ENCODE measurements at regions of chr5 and their contacts with region 1.

Region 1: DNA sequence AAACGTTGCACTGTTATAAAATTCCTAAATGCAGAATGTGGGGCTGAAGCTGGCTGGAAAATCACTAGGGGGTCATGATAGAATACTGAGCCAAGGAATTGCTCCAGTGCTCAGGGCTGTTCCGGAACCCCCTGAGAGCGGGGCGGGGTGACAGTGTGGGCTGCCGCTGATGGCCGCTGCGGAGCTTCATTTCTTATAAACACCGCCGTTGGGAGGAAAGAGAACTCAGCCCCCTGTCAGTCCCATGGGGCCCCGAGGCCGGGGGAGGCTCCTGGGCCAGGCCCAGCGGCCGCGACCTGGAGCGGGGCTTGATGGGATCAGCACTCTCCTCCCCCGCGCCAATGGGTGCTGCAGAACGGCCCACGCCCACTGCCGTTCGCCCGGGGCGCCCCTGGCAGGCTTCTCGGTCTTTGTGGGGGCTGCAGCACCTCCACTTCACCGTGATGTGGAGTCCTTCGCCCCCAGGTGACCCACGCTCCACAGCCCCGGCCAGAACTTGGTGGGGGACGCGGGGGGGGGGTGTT is 5.2 kb upstream of the IRF1 start:
- DNase-seq: peak; percentile 52 to 76 (median 60)
- H3K4me3 ChIP-seq: peak overlapping the region; percentile 25 to 61
- H3K4me3 Mint-ChIP-seq: peak overlapping the region; percentile 93 to 99 (median 96)
- H3K27ac ChIP-seq: peak overlapping the region; percentile 99
- H3K27ac Mint-ChIP-seq: peak overlapping the region; percentile 95 to 99 (median 98)
- H3K4me1 ChIP-seq: peaks cover 83% of the 10 kb centered on the region
- H3K4me1 Mint-ChIP-seq: peaks cover 41 to 92% (median 66%) of the 10 kb centered on the region in 4 donors
- H3K27me3 ChIP-seq: no peaks in the 10 kb centered on the region
- H3K27me3 Mint-ChIP-seq: no peaks in the 10 kb centered on the region

Region 2: GRCh38 chr5:132394667-132395259 is 101.0 kb before region 1 on chr5:
- CTCF ChIA-PET with region 1: interaction called, 543 read pairs
- POLR2A ChIA-PET with region 1: interaction called, 151 read pairs
- intact Hi-C with region 1: no loop called
- DNase-seq: no peak
- H3K4me3 ChIP-seq: no peak overlapping the region
- H3K4me3 Mint-ChIP-seq: peak overlapping the region in 4 of 8 donors; percentile 2 to 65 (median 59)
- H3K27ac ChIP-seq: no peak overlapping the region
- H3K27ac Mint-ChIP-seq: peak overlapping the region; percentile 50 to 92 (median 77)
- H3K4me1 ChIP-seq: peaks cover 70% of the 10 kb centered on the region
- H3K4me1 Mint-ChIP-seq: peaks cover 53 to 97% (median 72%) of the 10 kb centered on the region in 4 donors
- H3K27me3 ChIP-seq: no peaks in the 10 kb centered on the region
- H3K27me3 Mint-ChIP-seq: no peaks in the 10 kb centered on the region

Region 3: DNA sequence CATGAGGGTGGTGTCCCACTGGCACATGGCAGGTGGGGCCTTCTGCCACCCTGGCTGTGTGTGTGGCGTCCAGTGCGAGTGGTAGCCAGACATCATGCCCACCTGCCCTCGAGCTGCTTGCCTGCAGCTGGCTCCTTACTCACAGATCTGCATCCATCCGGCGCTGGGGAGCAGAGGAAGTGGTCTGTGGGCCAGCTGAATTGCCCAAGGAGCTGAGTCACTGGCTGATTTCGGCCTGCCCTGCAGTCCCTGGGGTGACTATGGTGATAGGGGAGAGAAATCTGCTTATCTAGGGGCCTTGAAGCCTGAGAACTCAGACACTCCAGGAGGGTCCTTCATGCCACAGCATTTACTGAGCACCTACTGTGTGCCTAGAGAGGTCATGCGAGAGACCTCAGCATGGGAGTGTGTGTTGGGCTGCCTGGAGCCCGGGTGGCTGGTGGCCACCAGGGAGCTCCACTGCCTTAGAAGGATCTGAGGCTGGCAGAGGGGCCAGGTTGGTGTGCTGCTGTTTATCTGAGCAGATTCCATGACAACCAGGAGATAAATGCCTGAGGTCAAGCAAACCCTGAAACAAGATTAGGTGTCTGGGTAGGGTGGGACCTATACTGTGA is 69.1 kb before region 1 on chr5:
- CTCF ChIA-PET with region 1: interaction called, 94 read pairs
- POLR2A ChIA-PET with region 1: interaction called, 565 read pairs
- intact Hi-C with region 1: loop called (anchors 1 kb)
- DNase-seq: peak; percentile 37 to 83 (median 44)
- H3K4me3 ChIP-seq: peak overlapping the region; percentile 10 to 28
- H3K4me3 Mint-ChIP-seq: peak overlapping the region; percentile 67 to 83 (median 76)
- H3K27ac ChIP-seq: peak overlapping the region; percentile 77
- H3K27ac Mint-ChIP-seq: peak overlapping the region; percentile 96 to 99 (median 98)
- H3K4me1 ChIP-seq: peaks cover 100% of the 10 kb centered on the region
- H3K4me1 Mint-ChIP-seq: peaks cover 80 to 98% (median 94%) of the 10 kb centered on the region in 4 donors
- H3K27me3 ChIP-seq: no peaks in the 10 kb centered on the region
- H3K27me3 Mint-ChIP-seq: no peaks in the 10 kb centered on the region

Region 4: DNA sequence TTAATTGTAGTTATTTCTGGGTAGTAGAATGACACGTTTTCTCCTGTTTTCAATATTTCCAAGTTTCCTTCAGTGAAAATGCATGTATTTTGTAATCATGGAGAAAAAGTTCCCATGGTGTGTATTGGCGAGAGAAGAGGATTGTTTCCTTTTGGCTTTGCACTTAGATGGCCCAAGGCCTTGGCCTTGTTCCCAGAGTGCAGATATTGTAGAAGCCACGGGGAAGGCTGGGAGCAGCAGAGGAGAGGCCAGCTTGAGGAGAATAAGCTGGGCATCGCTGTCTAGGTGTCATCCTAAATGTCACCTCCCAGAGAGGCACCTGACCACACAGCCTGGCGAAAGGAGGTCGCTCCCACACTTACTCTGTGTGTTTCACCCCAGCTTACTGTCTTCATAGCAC is 49.1 kb before region 1 on chr5:
- CTCF ChIA-PET with region 1: interaction called, 8 read pairs
- POLR2A ChIA-PET with region 1: interaction called, 44 read pairs
- intact Hi-C with region 1: no loop called
- DNase-seq: no peak
- H3K4me3 ChIP-seq: peak overlapping the region in 1 of 2 donors; percentile 7
- H3K4me3 Mint-ChIP-seq: peak overlapping the region; percentile 43 to 81 (median 75)
- H3K27ac ChIP-seq: peak overlapping the region; percentile 5
- H3K27ac Mint-ChIP-seq: peak overlapping the region; percentile 73 to 94 (median 89)
- H3K4me1 ChIP-seq: peaks cover 90% of the 10 kb centered on the region
- H3K4me1 Mint-ChIP-seq: peaks cover 56 to 97% (median 76%) of the 10 kb centered on the region in 4 donors
- H3K27me3 ChIP-seq: no peaks in the 10 kb centered on the region
- H3K27me3 Mint-ChIP-seq: no peaks in the 10 kb centered on the region

Region 5: GRCh38 chr5:132466433-132467286 is 29.1 kb before region 1 on chr5:
- CTCF ChIA-PET with region 1: interaction called, 92 read pairs
- POLR2A ChIA-PET with region 1: interaction called, 1,580 read pairs
- intact Hi-C with region 1: loop called (anchors 2 kb)
- DNase-seq: peak; percentile 84 to 91 (median 85)
- H3K4me3 ChIP-seq: peak overlapping the region; percentile 2 to 50
- H3K4me3 Mint-ChIP-seq: peak overlapping the region; percentile 66 to 87 (median 83)
- H3K27ac ChIP-seq: peak overlapping the region; percentile 63
- H3K27ac Mint-ChIP-seq: peak overlapping the region; percentile 94 to 98 (median 96)
- H3K4me1 ChIP-seq: peaks cover 99% of the 10 kb centered on the region
- H3K4me1 Mint-ChIP-seq: peaks cover 76 to 100% (median 90%) of the 10 kb centered on the region in 4 donors
- H3K27me3 ChIP-seq: no peaks in the 10 kb centered on the region
- H3K27me3 Mint-ChIP-seq: no peaks in the 10 kb centered on the region